ENCODE measurements at regions of chr14 and their contacts with region 1.

Region 1: DNA sequence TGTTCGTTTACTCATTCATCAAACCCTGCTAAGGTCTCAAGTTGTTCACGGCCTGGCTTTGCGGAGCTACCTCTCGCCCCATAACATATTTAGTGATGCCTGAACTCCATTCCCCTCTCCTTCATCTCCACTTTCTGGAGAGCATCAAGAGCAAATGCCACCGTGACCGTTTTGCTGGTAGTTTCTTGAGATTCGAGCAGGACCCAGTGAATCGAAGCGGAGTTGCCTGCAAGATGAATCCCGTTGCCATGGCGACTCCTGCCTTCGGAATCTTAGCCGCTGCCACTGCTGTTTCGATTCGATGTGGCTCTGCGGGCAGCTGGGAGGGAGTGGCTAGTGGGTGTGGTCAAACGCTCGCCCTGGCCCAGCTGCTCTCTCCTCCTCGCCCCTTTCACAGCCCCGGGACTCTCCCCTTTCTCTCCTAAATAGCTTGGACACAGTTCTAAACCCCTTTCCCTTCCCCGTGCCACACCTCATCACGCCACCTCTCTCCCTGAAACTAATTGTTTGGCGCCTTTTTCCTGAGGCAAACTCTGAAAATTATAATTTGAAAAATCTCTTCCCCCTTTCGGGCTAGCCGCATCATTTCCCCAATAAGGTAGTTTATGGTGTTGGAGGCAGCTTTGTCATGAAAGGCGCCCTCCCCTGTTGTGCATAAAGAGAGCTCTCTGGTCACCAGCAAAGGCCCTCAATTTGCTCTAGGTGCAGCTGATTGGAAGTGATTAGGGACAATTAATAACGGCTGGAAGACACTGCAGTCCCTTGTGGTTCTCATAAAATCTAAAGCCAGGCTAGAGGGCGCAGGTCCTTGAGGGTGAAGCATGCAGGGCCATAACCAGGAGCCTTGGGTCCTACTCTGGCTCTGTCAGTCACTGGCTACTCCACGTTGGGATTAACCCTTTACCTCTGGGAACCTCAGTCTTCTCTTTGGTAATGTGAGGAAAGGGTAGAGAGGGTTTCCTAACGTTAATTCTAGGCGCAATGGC is 1.6 kb downstream of the DAAM1 start:
- DNase-seq: peak; percentile 85
- ATAC-seq: peak; percentile 45
- H3K4me3 ChIP-seq: peak overlapping the region; percentile 87
- H3K27ac ChIP-seq: peak overlapping the region; percentile 95
- H3K4me1 ChIP-seq: peaks cover 33% of the 10 kb centered on the region
- H3K27me3 ChIP-seq: no peaks in the 10 kb centered on the region
- CTCF ChIP-seq: no peak

Region 2: DNA sequence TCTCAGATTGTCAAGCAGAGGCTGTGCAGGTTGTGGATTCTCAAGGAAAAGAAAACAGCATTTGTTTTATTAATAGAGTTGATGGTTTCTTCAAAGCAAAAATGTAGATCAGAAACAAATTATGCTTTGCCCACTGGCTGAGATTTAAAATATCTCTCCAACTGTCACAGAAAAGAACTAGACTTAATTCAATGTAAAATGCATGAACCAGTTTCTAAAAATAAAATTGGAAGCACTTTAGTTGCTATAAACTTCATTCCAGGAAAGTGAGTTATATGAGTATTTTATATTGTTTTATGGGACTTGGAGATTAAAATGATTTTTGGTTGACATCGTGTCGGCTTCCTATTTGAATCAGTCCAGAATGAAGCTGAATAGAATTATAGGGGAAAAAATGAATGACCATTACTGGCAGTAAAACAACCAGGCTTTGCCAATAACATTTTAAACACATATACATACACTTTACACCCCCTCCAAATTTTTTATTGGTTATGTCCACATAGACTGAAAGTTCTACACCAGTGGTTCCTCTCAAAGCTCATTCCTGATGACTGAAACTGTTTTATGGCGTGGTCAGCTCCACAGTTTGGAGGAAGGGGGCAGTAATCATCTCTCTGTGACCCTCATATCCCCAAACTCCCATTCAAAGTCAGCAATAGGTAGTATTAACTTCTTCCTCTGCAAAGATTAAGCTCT is 57.1 kb before region 1 on chr14:
- intact Hi-C with region 1: loop called (anchors 10 kb)
- DNase-seq: no peak
- ATAC-seq: no peak
- H3K4me3 ChIP-seq: no peak overlapping the region
- H3K27ac ChIP-seq: no peak overlapping the region
- H3K4me1 ChIP-seq: peaks cover 7% of the 10 kb centered on the region
- H3K27me3 ChIP-seq: no peaks in the 10 kb centered on the region
- CTCF ChIP-seq: peak; percentile 23

Region 3: DNA sequence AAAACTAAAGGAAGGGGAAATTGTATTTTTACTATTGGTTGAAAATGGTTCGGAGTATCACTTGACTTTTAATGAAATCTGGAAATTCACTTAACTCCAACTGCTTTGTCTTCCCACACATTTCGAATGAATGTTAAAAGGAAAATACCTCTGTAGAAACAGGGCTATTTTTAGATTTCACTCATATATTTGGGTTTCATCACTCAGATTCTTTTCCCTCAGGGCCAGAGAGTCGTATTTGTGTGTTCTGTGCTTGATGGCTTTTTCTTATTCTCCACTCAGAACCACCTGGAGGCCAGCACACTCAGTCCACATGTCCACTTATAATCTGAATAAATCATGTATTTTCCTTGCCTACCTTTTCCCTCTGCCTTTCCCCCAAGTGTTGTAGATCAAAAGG is 38.3 kb after region 1 on chr14:
- intact Hi-C with region 1: no loop called
- DNase-seq: no peak
- ATAC-seq: no peak
- H3K4me3 ChIP-seq: no peak overlapping the region
- H3K27ac ChIP-seq: no peak overlapping the region
- H3K4me1 ChIP-seq: peaks cover 7% of the 10 kb centered on the region
- H3K27me3 ChIP-seq: no peaks in the 10 kb centered on the region
- CTCF ChIP-seq: no peak